ENCODE measurements at regions of chr17 and their contacts with region 1.

Region 1: DNA sequence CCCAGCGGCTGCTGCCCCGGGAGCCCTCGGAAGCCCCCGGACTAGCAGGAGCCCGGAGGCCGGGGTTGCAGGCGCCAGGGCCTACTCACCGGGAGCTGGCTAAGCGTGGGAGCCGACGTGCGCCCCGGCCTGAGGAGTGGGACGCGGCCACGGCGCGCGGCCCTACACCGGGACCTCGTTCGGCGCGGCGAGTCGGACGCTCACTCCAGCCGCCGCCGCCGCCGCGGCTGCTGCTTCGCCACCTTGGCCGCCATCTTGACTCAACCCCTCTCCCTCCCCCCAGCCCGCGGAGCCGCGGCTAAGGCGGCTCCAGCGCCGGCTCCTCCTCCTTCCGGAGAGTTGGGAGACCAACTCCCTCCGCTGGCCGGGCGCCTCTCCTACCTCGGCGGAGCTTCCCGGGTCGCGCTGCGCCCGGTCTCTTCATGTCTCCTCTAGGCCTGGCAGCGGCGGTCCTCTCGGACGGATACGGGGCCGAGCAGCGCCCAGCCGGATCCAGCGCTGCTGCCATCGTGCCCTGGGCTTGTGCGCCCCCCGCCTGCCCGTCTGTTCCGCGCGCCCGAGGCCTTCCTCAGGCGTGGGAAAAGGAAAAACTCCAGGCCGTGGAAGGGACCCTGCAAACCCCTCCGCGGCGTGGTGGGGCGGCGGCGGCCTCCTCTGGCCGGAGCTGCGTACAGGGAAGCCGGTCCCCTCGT is at the start of gene NCOR1:
- DNase-seq: peak; percentile 71 to 92 (median 76)
- ATAC-seq: peak; percentile 90
- H3K4me3 ChIP-seq: peak within 1 kb of the TSS; percentile 97
- H3K27ac ChIP-seq: peak within 1 kb of the TSS; percentile 97
- H3K4me1 ChIP-seq: peaks cover 0 to 12% of the 10 kb centered on the region in 2 experiments; a peak in 2 of 5 replicates
- H3K27me3 ChIP-seq: no peaks in the 10 kb centered on the region
- CTCF ChIP-seq: peak; percentile 19 to 45 (median 43); a peak in 4 of 6 replicates
- EP300 ChIP-seq: no peak
- POLR2A ChIP-seq: peak; percentile 90
- RAD21 ChIP-seq: peak in 1 of 2 experiments; percentile 27; a peak in 2 of 4 replicates
- polyA plus RNA-seq, gene NCOR1: 20.2 to 35.3 TPM

Region 2: DNA sequence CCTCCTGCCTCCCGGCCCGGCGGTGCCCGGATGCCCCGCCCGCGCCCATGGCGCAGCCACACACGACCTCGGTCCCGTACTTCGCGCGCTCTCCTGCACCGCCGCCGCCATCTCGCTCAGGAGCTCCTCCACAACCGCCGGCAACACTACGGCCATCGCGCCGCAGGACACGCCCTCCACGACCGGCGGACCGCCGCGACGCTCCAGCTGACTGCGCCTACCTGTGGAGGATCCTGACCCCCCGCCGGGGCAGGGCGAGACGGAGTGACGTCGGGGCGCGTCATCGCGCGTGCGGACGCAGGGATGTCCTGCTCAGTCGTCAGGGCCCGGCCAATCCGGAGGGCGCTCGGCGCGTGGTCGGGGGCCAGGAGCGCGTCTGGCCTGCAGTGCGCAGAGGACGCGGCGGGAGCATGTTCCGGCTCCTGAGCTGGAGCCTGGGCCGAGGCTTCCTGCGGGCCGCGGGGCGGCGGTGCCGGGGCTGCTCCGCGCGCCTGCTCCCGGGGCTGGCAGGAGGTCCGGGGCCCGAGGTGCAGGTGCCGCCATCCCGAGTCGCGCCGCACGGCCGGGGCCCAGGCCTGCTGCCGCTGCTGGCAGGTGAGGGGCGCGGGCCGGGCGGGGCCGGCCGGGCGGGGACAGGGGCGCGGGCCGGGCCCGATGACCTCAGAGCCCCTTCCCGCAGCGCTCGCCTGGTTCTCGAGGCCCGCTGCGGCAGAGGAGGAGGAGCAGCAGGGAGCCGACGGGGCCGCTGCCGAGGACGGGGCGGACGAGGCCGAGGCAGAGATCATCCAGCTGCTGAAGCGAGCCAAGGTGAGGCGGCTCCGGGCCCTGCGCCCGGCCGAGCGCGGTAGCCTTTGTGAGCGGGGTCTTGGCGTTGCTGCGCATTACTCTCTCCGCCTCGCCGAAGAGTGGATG is 215.7 kb before region 1 on chr17 and contains the starts of genes TTC19 and ZSWIM7:
- CTCF ChIA-PET with region 1: no interaction called
- POLR2A ChIA-PET with region 1: no interaction called
- in situ Hi-C with region 1: no loop called
- intact Hi-C with region 1: loop called (anchors 10 kb)
- DNase-seq: peak; percentile 89 to 96 (median 94)
- ATAC-seq: peak; percentile 97
- H3K4me3 ChIP-seq: peak within 1 kb of the TSS; percentile 84
- H3K27ac ChIP-seq: peak within 1 kb of the TSS; percentile 85
- H3K4me1 ChIP-seq: peaks cover 8 to 15% of the 10 kb centered on the region in 2 experiments; a peak in 2 of 5 replicates
- H3K27me3 ChIP-seq: no peaks in the 10 kb centered on the region
- CTCF ChIP-seq: no peak; a peak in 1 of 6 replicates
- EP300 ChIP-seq: peak; percentile 26; the same call in 1 of the 2 replicates
- POLR2A ChIP-seq: peak; percentile 79
- RAD21 ChIP-seq: no peak; a peak in 1 of 4 replicates
- polyA plus RNA-seq, gene TTC19: 8.9 to 10.5 TPM
- polyA plus RNA-seq, gene ZSWIM7: 5.9 to 8.0 TPM

Region 3: DNA sequence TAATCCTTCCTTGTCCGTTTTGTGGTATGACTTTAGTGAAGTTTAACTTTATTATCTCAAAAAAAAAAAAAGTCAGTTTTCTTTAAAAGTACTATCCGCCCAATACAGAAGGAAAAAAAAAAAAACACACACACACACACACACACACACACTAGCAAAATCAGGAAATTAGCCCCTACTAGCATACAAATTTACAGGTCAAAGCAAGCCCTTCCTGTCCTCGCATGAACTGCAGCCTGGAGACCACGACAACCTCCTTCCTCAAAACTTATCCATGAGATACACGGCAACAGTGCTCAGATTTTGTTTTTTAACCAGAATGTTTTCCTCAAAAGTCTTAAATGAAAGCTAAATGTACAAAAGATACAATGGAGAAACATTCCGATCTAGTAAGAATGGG is 16.3 kb before region 1 on chr17:
- CTCF ChIA-PET with region 1: no interaction called
- POLR2A ChIA-PET with region 1: no interaction called
- in situ Hi-C with region 1: no loop called
- intact Hi-C with region 1: no loop called
- DNase-seq: no peak
- ATAC-seq: no peak
- H3K4me3 ChIP-seq: no peak overlapping the region
- H3K27ac ChIP-seq: no peak overlapping the region
- H3K4me1 ChIP-seq: peaks cover 0 to 3% of the 10 kb centered on the region in 2 experiments; a peak in 3 of 5 replicates
- H3K27me3 ChIP-seq: no peaks in the 10 kb centered on the region
- CTCF ChIP-seq: no peak
- EP300 ChIP-seq: no peak
- POLR2A ChIP-seq: no peak
- RAD21 ChIP-seq: no peak

Measured in K562 (cell line).